Activated B cell treated with CpG ODN at 0.5 μM for 24 hours (primary cell): ENCODE measurements at regions of chr3 and their contacts with region 1.

Region 1: DNA sequence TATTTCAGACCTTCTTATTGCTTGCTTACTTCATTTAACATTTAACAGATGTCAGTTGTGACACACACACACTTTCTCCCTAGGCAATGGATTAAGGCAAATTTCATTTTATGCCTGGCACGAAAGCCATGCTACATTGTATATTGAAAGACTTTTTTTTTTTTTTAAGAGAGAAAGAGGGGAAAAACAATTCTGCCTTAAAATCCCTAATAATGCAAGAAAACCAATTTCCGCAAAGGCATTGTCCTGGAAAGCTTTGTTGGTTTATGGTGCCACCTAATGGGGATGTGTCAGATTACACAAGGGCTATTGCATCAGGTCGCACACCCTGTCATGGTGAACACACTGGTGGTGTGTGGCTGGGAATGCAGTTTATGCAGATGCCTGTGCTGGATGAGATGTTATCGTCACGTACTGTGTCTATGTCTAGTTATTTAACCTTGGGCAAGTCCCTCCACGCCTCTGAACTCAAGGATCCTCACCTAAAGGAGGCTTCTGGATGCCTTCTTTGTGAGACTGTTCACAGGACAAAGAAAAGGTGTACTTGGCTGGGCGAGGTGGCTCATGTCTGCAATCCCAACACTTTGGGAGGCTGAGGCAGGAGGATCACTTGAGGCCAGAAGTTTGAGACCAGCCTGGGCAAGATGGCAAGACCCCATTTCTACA is 37.3 kb upstream of the RFTN1 start:
- DNase-seq: peak; percentile 32
- ATAC-seq: peak; percentile 98
- H3K4me3 Mint-ChIP-seq: no peak overlapping the region
- H3K27ac Mint-ChIP-seq: peak overlapping the region; percentile 43
- H3K4me1 Mint-ChIP-seq: peaks cover 7% of the 10 kb centered on the region
- H3K27me3 Mint-ChIP-seq: peaks cover 6% of the 10 kb centered on the region
- CTCF ChIP-seq: no peak

Region 2: DNA sequence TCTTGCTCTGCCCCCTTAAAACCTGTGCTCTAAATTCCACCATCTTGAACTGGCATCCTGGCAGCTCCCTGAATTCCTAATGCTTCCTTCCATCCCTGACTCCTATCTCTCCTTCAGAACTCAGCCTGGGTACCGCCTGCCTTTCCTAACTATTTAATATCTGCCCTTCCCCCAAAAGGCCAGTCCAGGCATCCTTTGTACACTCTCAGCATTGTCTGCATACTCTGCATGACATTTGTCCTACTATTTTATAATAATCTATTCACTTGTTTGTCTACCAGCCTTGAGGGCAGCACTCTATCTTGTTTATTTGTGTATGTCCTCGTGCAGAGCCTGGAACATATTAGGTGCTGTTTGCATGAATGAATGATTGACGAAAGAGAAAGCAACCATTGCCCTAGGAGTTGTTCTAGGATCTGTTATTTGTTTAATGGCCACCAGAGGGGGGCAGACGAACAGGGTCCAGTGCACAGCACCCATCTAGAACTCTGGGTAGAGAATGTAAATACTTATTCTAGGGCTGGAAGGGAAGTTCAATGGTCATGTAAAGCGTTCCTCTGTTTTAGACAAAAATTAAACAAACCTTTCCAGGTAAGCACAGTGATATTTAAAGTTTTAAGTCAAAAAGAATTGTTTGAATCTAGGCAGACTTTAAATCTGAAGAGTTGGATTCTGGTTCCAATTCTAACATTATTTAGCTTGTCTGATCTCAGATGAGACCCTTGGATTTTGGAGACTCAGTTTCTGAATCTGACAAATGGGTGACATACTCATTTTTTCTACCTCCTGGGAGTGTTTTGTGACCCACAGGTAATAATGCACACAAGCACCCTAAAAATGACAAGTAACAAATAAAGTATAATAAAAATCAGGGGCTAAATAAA is 502.1 kb before region 1 on chr3:
- CTCF ChIA-PET with region 1: no interaction called
- POLR2A ChIA-PET with region 1: no interaction called
- intact Hi-C with region 1: loop called (anchors 1 kb)
- DNase-seq: no peak
- ATAC-seq: peak; percentile 86
- H3K4me3 Mint-ChIP-seq: no peak overlapping the region
- H3K27ac Mint-ChIP-seq: no peak overlapping the region
- H3K4me1 Mint-ChIP-seq: no peaks in the 10 kb centered on the region
- H3K27me3 Mint-ChIP-seq: peaks cover 2% of the 10 kb centered on the region
- CTCF ChIP-seq: peak; percentile 27

Region 3: GRCh38 chr3:16290007-16290826 is 260.6 kb before region 1 on chr3:
- CTCF ChIA-PET with region 1: interaction called, 74 read pairs
- POLR2A ChIA-PET with region 1: interaction called, 11 read pairs
- intact Hi-C with region 1: loop called (anchors 1 kb)
- DNase-seq: no peak
- ATAC-seq: peak; percentile 49
- H3K4me3 Mint-ChIP-seq: no peak overlapping the region
- H3K27ac Mint-ChIP-seq: no peak overlapping the region
- H3K4me1 Mint-ChIP-seq: peaks cover 36% of the 10 kb centered on the region
- H3K27me3 Mint-ChIP-seq: no peaks in the 10 kb centered on the region
- CTCF ChIP-seq: peak; percentile 51

Region 4: DNA sequence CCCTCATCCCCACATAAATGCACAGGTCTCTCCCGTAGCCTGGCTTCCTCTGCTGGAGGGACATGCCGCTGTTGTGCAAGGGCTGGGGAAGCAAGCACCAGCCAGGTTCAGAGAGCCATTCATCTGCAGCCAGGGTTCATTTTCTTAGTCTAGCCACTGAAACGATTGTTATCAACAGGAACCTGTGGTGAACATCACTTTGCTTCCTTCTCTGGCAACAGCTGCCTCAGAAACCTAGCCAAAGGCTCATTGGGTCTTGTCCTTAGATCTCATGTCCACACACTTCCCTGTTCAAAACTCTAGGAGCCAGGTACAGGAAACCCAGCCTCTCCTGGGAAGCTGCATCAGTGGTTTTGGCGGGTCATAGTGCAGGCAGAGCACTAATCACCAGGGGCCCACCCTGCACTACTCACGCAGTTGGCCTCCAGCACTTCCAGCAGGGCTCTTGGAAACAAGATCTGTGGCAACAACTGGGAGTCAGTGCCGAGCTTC is 238.8 kb before region 1 on chr3:
- CTCF ChIA-PET with region 1: no interaction called
- POLR2A ChIA-PET with region 1: no interaction called
- intact Hi-C with region 1: no loop called
- DNase-seq: no peak
- ATAC-seq: peak; percentile 36
- H3K4me3 Mint-ChIP-seq: peak overlapping the region; percentile 44
- H3K27ac Mint-ChIP-seq: peak overlapping the region; percentile 73
- H3K4me1 Mint-ChIP-seq: peaks cover 28% of the 10 kb centered on the region
- H3K27me3 Mint-ChIP-seq: no peaks in the 10 kb centered on the region
- CTCF ChIP-seq: no peak

Region 5: GRCh38 chr3:16467393-16467792 is 83.4 kb before region 1 on chr3:
- CTCF ChIA-PET with region 1: no interaction called
- POLR2A ChIA-PET with region 1: no interaction called
- intact Hi-C with region 1: loop called (anchors 5 kb)
- DNase-seq: peak; percentile 51
- ATAC-seq: peak; percentile 99
- H3K4me3 Mint-ChIP-seq: peak overlapping the region; percentile 52
- H3K27ac Mint-ChIP-seq: peak overlapping the region; percentile 55
- H3K4me1 Mint-ChIP-seq: peaks cover 69% of the 10 kb centered on the region
- H3K27me3 Mint-ChIP-seq: no peaks in the 10 kb centered on the region
- CTCF ChIP-seq: no peak

Region 6: DNA sequence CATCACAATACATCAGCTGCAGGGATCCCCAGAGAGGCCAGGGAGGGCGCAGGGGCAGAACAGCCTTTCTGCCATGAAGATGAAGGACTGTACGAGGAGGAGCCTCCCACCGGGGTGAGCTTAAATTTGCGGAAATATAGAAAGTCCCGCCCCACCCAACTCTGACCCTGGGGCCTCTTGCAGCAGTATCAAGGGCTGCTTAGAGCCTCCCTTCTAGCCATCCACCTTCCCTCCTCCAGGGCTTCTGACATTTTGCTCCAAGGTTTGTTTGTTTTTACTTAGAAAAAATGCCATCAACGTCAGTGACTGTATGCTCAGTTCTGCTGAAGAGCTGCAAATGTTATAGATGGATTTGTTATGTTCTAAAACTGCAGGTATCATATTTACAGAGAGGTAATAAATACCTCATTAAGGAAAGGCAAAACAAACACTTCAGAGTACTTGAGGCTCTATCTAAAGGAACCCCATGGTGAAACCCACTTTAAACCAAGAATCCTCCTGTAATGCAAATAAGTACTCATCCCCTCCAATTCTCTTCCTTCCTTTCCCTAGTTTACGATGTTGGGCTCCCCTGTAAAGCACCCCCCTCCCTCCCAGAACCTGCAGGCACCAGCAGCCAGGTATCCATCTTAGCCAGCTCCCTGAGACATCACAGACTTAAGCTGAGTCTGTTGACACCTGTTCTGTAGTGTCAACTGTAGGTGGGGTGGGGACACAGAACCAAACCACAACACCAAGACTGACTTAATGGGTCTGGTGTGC is 67.9 kb before region 1 on chr3:
- CTCF ChIA-PET with region 1: interaction called, 4 read pairs
- POLR2A ChIA-PET with region 1: no interaction called
- intact Hi-C with region 1: loop called (anchors 5 kb)
- DNase-seq: peak; percentile 45
- ATAC-seq: peak; percentile 94
- H3K4me3 Mint-ChIP-seq: peak overlapping the region; percentile 68
- H3K27ac Mint-ChIP-seq: peak overlapping the region; percentile 78
- H3K4me1 Mint-ChIP-seq: peaks cover 86% of the 10 kb centered on the region
- H3K27me3 Mint-ChIP-seq: no peaks in the 10 kb centered on the region
- CTCF ChIP-seq: no peak